ENCODE measurements at regions of chr10 and their contacts with region 1.

Region 1: GRCh38 chr10:25327273-25327672 is 152.5 kb downstream of the GPR158 start:
- DNase-seq: no peak
- ATAC-seq: no peak
- H3K4me3 ChIP-seq: no peak overlapping the region
- H3K27ac ChIP-seq: no peak overlapping the region
- H3K4me1 ChIP-seq: no peaks in the 10 kb centered on the region
- H3K27me3 ChIP-seq: no peaks in the 10 kb centered on the region
- CTCF ChIP-seq: no peak
- POLR2A ChIP-seq: no peak
- RAD21 ChIP-seq: no peak

Region 2: GRCh38 chr10:25068152-25069058 is 258.9 kb before region 1 on chr10:
- CTCF ChIA-PET with region 1: no interaction called
- POLR2A ChIA-PET with region 1: no interaction called
- dilution Hi-C with region 1: no loop called
- in situ Hi-C with region 1: no loop called
- intact Hi-C with region 1: no loop called
- DNase-seq: peak; percentile 84
- ATAC-seq: peak; percentile 74
- H3K4me3 ChIP-seq: no peak overlapping the region
- H3K27ac ChIP-seq: peak overlapping the region; percentile 5; the same call in 1 of the 2 replicates
- H3K4me1 ChIP-seq: no peaks in the 10 kb centered on the region
- H3K27me3 ChIP-seq: no peaks in the 10 kb centered on the region
- CTCF ChIP-seq: no peak
- POLR2A ChIP-seq: no peak
- RAD21 ChIP-seq: no peak

Region 3: GRCh38 chr10:25280599-25280998 is 46.7 kb before region 1 on chr10:
- CTCF ChIA-PET with region 1: no interaction called
- POLR2A ChIA-PET with region 1: no interaction called
- dilution Hi-C with region 1: no loop called
- in situ Hi-C with region 1: no loop called
- intact Hi-C with region 1: loop called (anchors 5 kb)
- DNase-seq: no peak
- ATAC-seq: no peak
- H3K4me3 ChIP-seq: no peak overlapping the region
- H3K27ac ChIP-seq: no peak overlapping the region
- H3K4me1 ChIP-seq: no peaks in the 10 kb centered on the region
- H3K27me3 ChIP-seq: no peaks in the 10 kb centered on the region
- CTCF ChIP-seq: no peak
- POLR2A ChIP-seq: no peak
- RAD21 ChIP-seq: no peak

Measured in IMR-90 (cell line).